ENCODE measurements at regions of chr5 and their contacts with region 1.

Region 1: DNA sequence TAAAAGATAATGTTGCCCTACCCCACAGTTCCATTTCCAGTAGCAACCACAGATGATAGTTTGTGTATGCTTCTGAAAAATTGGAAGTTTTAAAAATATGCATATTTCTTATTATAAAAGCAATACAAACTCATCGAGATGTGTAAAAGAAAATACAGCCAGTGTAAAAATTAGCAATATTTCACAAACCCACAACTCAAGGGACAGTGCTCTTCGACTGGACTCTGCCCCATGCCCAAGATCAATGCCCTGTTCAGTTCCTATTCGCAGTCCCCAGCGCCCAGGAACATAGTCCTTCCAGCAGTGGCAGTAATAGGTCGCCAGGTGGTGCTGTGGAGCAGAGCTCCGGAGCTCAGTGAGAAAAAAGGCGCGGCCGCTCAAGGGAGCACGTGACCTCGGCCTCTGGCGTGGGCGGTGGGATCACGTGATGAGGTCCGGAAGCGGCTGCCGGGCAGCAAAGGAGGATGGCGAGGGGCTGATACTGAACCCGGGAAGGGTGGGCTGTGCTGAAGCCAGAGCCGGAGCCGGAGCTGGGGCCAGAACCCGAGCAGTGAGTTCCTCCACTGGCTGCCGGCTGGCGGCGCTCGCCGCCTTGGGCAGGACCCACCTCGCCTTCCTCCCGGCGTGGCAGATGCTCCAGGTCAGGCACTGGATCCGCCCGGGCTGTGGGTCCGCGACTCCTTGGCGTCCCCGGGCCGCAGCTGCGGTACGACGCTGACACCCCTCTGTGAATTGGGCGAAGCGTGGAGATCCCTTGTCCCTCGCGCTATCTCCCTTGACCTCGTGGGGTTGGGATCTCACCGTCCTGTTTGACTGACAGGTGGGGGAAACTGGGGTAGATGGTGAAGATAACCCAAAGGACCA is at the start of gene SLC36A1:
- DNase-seq: peak; percentile 94 to 96
- H3K4me3 ChIP-seq: peak within 1 kb of the TSS; percentile 82 to 85
- H3K27ac ChIP-seq: peak within 1 kb of the TSS; percentile 57 to 68
- H3K4me1 ChIP-seq: peaks cover 0 to 12% (median 8%) of the 10 kb centered on the region in 4 donors
- H3K27me3 ChIP-seq: no peaks in the 10 kb centered on the region
- CTCF ChIP-seq: peak; percentile 96 to 98

Region 2: DNA sequence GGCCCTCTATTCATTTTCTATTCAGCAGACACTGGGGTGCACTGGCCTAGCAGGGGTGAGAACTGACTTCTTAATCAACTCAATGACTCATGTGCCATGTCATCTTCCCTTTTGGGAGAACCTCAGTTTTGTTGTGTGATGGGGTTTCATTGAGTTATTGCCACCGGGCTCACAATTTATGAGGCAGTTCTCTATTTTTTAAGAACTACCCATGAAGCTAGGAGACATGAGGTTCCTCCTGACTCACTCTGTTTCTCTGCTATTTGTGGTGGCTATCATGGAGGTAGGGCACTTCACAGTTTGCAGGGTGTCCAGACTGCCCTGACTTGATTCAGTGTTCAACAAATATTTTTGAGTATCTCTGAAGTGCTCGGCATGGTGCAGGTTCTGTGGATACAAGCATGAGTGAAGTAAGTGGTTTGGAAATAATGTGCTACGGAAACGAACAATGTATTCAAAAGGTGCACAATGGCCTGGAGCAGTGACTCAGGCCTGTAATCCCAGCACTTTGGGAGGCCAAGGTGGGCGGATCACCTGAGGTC is 200.0 kb after region 1 on chr5:
- intact Hi-C with region 1: loop called (anchors 5 kb)
- DNase-seq: no peak
- H3K4me3 ChIP-seq: no peak overlapping the region
- H3K27ac ChIP-seq: no peak overlapping the region
- H3K4me1 ChIP-seq: no peaks in the 10 kb centered on the region
- H3K27me3 ChIP-seq: no peaks in the 10 kb centered on the region
- CTCF ChIP-seq: no peak

Region 3: DNA sequence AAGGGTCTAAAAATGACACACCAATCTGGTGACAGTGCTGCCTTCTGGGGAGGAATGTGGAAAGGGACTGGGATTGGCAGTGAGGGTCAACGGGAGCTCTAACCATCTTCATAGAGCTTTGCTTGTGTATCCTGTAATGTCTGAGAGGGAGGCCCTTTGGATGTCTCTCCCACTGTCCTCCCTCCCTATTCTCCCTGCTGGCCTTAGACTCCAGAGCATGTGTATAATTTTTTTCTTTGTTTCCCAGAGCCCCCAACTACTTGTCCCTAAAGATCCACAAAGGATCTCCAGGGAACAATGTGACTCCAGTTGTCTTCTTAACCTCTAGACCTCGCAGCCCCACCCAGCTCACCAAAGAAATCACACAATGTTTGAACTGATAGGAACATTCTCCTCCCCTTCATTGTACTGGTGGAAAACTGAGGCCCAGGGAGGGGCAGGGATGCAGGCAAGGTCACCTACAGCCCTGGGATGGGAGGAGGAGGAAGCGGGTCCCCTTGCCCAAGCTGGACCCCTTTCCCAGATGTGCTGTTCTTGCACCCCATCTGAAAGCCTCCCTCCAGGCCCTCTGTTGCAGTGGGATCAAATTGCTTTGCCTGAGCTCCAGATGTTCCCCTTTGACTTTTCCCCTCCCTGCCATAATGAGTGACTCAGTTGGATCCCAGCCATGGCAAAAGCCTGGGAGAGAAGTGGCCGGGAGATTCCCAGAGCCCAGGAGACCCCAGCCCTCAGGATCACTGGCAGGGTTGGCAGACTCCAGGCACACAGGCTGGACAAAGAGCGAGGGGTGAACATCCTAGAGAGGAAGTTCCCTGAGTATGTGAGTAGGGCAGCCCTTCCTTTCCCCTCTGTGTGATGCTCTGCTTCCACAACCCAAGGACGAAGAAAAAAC is 217.5 kb after region 1 on chr5:
- intact Hi-C with region 1: no loop called
- DNase-seq: no peak
- H3K4me3 ChIP-seq: no peak overlapping the region
- H3K27ac ChIP-seq: peak overlapping the region; percentile 89 to 91
- H3K4me1 ChIP-seq: peaks cover 0 to 84% (median 57%) of the 10 kb centered on the region in 4 donors
- H3K27me3 ChIP-seq: no peaks in the 10 kb centered on the region
- CTCF ChIP-seq: no peak

Region 4: GRCh38 chr5:151740336-151740942 is 293.0 kb after region 1 on chr5:
- intact Hi-C with region 1: loop called (anchors 5 kb)
- DNase-seq: peak; percentile 48 to 84
- H3K4me3 ChIP-seq: peak overlapping the region in 1 of 2 donors; percentile 7
- H3K27ac ChIP-seq: peak overlapping the region; percentile 74 to 80
- H3K4me1 ChIP-seq: peaks cover 0 to 46% (median 25%) of the 10 kb centered on the region in 4 donors
- H3K27me3 ChIP-seq: no peaks in the 10 kb centered on the region
- CTCF ChIP-seq: peak; percentile 86 to 96